ENCODE measurements at regions of chr16 and their contacts with region 1.

Region 1: GRCh38 chr16:2296661-2297505 is 29.0 kb upstream of the RNPS1 start:
- DNase-seq: peak; percentile 33
- H3K4me3 ChIP-seq: no peak overlapping the region
- H3K27ac ChIP-seq: no peak overlapping the region
- H3K4me1 ChIP-seq: no peaks in the 10 kb centered on the region
- H3K27me3 ChIP-seq: no peaks in the 10 kb centered on the region
- CTCF ChIP-seq: peak; percentile 59

Region 2: DNA sequence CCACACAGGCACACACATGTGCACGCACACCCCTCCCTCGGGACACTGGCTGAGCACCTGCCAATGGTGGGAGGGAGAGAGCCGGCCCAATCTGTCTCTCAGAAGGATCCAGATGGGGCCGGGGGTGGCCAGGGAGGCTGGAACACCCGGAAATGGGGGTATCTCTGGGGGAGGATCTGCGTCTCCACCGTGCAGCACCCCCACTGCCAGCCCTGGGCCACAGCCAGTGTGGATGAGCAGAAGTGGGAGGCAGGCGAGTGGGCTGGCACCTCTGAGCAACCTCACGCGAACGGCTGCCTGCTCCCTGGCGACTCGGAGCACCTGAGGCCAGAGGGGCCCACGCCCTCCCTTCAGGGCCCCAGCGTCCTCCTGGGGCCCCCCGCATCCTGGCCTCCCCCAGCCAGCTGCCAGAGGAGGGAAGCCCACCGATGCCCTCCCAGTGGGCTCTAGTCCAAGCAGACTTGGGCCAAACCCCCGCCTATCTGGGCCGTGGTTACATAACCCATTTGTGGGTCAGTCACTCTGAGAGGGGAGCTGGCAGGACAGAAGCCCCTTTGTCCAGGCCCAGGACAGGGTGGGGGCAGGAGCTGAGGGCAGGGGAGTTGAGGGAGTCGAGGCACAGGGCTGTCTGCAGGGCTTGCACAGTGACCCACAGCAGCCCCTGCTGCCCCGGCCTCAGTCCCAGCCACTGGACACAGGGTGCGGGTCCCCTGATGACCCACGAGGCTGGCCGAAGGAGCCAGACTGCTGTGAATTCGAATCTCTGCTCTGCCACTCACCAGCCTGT is 106.0 kb before region 1 on chr16:
- CTCF ChIA-PET with region 1: no interaction called
- POLR2A ChIA-PET with region 1: no interaction called
- intact Hi-C with region 1: no loop called
- DNase-seq: no peak
- H3K4me3 ChIP-seq: no peak overlapping the region
- H3K27ac ChIP-seq: no peak overlapping the region
- H3K4me1 ChIP-seq: peaks cover 6% of the 10 kb centered on the region
- H3K27me3 ChIP-seq: peaks cover 10% of the 10 kb centered on the region
- CTCF ChIP-seq: no peak

Region 3: DNA sequence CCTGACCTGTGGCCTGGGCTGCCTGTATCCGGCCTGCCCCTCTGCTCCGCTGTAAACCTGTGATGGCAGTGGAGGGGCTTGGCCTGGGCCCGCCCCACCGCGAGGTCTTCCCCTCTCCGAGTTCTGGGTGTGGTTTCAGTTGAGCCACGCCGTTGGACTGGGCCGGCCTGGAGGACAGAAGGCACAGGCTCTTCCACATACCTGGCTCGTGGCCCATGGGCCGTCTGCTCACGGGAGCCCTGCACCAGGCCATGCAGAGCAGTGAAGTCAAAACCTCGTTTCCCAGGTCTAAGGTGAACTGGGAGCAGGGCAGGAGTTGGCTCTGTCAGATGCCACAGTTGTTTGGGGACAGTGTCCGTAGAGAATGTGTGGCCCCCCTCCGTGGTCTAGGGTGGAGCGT is 23.4 kb before region 1 on chr16:
- CTCF ChIA-PET with region 1: no interaction called
- POLR2A ChIA-PET with region 1: interaction called, 13 read pairs
- intact Hi-C with region 1: no loop called
- DNase-seq: no peak
- H3K4me3 ChIP-seq: no peak overlapping the region
- H3K27ac ChIP-seq: no peak overlapping the region
- H3K4me1 ChIP-seq: peaks cover 4% of the 10 kb centered on the region
- H3K27me3 ChIP-seq: no peaks in the 10 kb centered on the region
- CTCF ChIP-seq: no peak

Measured in A673 (cell line).